Heart right ventricle (tissue), 16 donors: ENCODE measurements at regions of chr22 and their contacts with region 1.

Region 1: DNA sequence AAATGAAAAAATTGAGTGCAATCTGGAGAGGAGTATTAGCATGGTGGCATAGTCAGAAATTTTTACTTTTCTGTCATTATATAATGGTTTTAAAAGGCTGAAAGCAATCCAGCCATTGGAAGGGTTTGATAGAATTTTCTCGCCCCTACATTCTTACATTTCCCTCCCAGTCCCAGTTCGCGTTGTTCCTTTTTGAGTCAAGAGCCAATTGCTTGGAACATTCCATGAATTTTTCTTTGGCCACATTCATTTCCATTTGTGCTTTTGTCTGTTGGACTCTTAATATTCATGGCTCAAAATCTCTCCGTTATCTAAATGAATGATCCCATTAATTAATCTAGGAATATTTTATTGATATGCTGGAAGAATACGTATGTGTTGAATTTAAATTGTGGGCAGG is 66.0 kb downstream of the GRK3 start:
- DNase-seq: no peak
- ATAC-seq: no peak
- H3K4me3 ChIP-seq: no peak overlapping the region
- H3K27ac ChIP-seq: no peak overlapping the region
- H3K4me1 ChIP-seq: peaks cover 0 to 17% (median 5%) of the 10 kb centered on the region in 9 donors
- H3K27me3 ChIP-seq: no peaks in the 10 kb centered on the region
- CTCF ChIP-seq: no peak

Region 2: GRCh38 chr22:25572708-25573171 is 57.7 kb before region 1 on chr22:
- intact Hi-C with region 1: loop called in 1 of 10 experiments (anchors 10 kb)
- DNase-seq: no peak
- ATAC-seq: no peak
- H3K4me3 ChIP-seq: no peak overlapping the region
- H3K27ac ChIP-seq: no peak overlapping the region
- H3K4me1 ChIP-seq: peaks cover 0 to 26% (median 0%) of the 10 kb centered on the region in 9 donors
- H3K27me3 ChIP-seq: no peaks in the 10 kb centered on the region
- CTCF ChIP-seq: no peak